ENCODE measurements at regions of chr5 and their contacts with region 1.

Region 1: DNA sequence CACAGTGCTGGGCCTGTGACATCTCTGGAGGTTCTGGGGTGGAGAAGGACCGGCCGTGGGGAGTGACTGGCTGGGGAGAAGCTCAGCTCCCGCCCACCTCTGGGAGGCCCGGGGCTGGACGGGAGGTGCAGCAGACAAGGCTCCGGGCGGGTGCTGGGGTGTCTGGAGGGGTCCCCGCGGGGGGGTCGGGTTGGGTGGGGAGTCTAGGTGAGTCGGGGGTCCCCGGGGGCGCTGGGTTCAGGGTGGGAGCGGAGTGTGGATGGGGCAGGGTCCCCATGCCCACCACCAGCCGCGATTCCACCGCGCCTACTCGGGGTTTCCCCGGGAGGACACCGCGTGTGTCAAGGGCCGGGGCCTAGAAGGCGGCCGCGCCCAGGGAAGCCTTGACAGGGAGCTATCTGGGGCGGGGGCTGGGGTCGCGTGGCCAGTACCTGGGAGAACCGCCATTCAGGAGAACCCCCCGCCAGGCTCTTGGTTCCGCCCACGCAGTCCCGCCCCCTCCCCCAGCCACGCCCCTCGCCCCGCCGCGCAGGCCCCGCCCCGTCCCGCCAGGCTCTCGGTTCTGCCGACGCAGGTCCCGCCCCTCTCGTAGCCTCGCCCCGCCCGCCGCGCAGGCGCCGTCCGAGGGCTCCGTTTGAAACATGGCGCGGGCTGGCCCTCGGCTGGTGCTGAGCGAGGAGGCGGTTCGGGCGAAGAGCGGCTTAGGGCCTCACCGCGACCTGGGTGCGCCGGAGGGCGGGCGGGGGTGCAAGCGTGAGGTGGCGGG is at the start of gene CEP72:
- DNase-seq: peak; percentile 81 to 96 (median 88)
- ATAC-seq: peak; percentile 98
- H3K4me3 ChIP-seq: peak within 1 kb of the TSS; percentile 59
- H3K4me3 Mint-ChIP-seq: peak within 1 kb of the TSS; percentile 84 to 99 (median 95)
- H3K27ac ChIP-seq: peak within 1 kb of the TSS; percentile 75
- H3K27ac Mint-ChIP-seq: peak within 1 kb of the TSS; percentile 76 to 96 (median 85)
- H3K4me1 ChIP-seq: peaks cover 5 to 7% of the 10 kb centered on the region in 2 donors
- H3K4me1 Mint-ChIP-seq: peaks cover 36 to 60% (median 56%) of the 10 kb centered on the region in 7 donors
- H3K27me3 ChIP-seq: no peaks in the 10 kb centered on the region
- H3K27me3 Mint-ChIP-seq: peaks cover 0 to 14% (median 8%) of the 10 kb centered on the region in 5 donors
- total RNA-seq, gene CEP72: 13.4 to 33.8 (median 22.7) TPM

Region 2: GRCh38 chr5:270340-270739 is 341.6 kb before region 1 on chr5:
- CTCF ChIA-PET with region 1: no interaction called
- POLR2A ChIA-PET with region 1: no interaction called
- intact Hi-C with region 1: loop called in 1 of 2 experiments (anchors 5 kb)
- DNase-seq: no peak
- ATAC-seq: no peak
- H3K4me3 ChIP-seq: no peak overlapping the region
- H3K4me3 Mint-ChIP-seq: peak overlapping the region; percentile 72 to 95 (median 91)
- H3K27ac ChIP-seq: no peak overlapping the region
- H3K27ac Mint-ChIP-seq: peak overlapping the region in 8 of 9 donors; percentile 59 to 99 (median 86)
- H3K4me1 ChIP-seq: peaks cover 0 to 7% of the 10 kb centered on the region in 2 donors
- H3K4me1 Mint-ChIP-seq: peaks cover 20 to 41% (median 39%) of the 10 kb centered on the region in 7 donors
- H3K27me3 ChIP-seq: no peaks in the 10 kb centered on the region
- H3K27me3 Mint-ChIP-seq: no peaks in the 10 kb centered on the region

Region 3: DNA sequence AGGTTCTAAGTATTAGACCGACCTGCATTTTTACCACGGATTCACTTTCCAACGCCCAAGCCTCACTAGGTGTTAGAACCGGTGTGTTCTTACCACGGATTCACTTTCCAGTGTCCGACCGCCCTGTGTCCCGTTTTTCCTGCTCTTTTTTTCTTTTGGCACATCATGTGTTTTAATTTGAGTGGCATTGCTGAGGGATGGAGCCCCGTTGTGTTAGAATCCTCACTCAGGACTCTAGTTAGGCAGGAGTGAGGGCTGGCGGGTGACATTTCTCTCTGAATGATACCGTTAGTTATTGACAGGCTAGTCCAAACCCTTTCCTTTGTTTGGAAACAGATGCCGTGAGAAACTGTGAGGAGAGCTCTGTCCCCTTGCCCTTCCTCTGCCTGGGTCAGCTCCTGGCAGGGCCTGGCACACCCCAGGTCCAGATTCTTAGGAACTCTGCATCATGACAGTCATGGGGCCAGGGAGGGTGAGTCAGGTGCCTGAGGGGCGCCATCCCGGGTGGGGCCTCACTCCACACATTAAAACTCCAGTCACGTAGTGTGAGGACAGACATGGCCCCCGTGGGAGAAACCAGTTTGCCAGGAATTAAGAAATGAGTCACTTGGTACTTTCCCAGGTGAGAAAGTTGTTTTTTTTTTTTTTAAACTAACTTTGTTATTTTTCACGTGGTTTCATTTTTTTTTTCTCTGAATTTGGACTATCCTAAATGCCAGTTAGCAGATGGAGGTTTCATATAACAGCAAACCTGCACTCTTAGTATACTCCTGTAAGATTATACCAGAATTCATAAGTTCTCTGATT is 153.2 kb before region 1 on chr5:
- CTCF ChIA-PET with region 1: no interaction called
- POLR2A ChIA-PET with region 1: no interaction called
- intact Hi-C with region 1: no loop called
- DNase-seq: peak in 1 of 9 donors; percentile 70
- ATAC-seq: no peak
- H3K4me3 ChIP-seq: no peak overlapping the region
- H3K4me3 Mint-ChIP-seq: peak overlapping the region in 1 of 10 donors; percentile 69
- H3K27ac ChIP-seq: peak overlapping the region; percentile 37
- H3K27ac Mint-ChIP-seq: peak overlapping the region in 7 of 9 donors; percentile 48 to 89 (median 73)
- H3K4me1 ChIP-seq: peaks cover 0 to 13% of the 10 kb centered on the region in 2 donors
- H3K4me1 Mint-ChIP-seq: peaks cover 9 to 66% (median 22%) of the 10 kb centered on the region in 7 donors
- H3K27me3 ChIP-seq: no peaks in the 10 kb centered on the region
- H3K27me3 Mint-ChIP-seq: no peaks in the 10 kb centered on the region

Region 4: DNA sequence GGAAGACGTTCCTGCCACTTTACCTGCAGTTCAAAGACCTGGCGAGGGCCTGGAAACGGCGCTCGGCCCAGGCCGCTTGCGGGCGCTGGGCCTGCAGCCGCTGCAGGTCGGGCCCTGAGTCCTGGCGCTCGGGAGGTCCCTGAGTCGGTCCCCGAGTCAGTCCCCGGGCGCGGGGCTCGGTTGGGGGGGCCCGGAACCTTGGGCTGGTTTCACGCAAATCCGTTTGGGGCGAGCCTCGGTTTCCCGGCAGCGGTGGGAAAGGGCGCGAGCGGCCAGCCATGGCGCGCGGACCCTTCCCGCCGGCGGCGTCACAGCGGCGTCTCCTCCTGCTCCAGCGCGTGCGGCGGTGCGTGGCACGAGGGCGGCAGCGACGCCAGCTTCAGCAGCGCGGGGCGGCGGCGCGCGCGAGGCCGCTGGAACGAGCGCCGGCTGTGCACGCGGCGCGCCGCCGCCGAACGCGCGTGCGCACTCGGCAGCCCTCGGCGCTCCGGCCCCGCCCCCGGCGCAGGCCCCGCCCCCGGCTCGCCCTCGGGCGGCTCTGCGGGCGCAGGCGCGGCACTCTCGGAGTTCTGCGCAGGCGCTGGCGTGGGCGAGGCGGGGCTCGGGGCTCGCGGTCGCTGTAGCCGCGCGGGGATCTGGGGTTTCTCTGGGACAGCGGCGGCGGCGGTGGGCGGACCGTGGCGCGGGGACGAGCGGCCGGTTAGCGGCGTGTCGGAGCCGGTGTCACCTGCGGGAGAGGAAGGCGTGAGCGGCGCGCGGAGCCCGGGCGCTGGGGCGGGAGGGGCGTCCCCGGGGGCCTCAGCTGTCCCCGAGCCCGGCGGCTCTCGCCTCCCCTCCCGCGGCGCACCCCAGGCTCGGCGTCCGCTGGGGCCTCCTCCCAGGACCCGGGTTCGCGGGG is 139.0 kb before region 1 on chr5:
- CTCF ChIA-PET with region 1: no interaction called
- POLR2A ChIA-PET with region 1: interaction called, 6 read pairs
- intact Hi-C with region 1: loop called (anchors 1 kb)
- DNase-seq: peak; percentile 82 to 97 (median 90)
- ATAC-seq: peak; percentile 89
- H3K4me3 ChIP-seq: peak overlapping the region; percentile 82
- H3K4me3 Mint-ChIP-seq: peak overlapping the region; percentile 80 to 91 (median 84)
- H3K27ac ChIP-seq: peak overlapping the region; percentile 95
- H3K27ac Mint-ChIP-seq: peak overlapping the region in 6 of 9 donors; percentile 15 to 89 (median 84)
- H3K4me1 ChIP-seq: peaks cover 14 to 18% of the 10 kb centered on the region in 2 donors
- H3K4me1 Mint-ChIP-seq: peaks cover 13 to 22% (median 19%) of the 10 kb centered on the region in 7 donors
- H3K27me3 ChIP-seq: peaks cover 0 to 3% of the 10 kb centered on the region in 2 donors
- H3K27me3 Mint-ChIP-seq: peaks cover 0 to 10% (median 8%) of the 10 kb centered on the region in 5 donors

Region 5: DNA sequence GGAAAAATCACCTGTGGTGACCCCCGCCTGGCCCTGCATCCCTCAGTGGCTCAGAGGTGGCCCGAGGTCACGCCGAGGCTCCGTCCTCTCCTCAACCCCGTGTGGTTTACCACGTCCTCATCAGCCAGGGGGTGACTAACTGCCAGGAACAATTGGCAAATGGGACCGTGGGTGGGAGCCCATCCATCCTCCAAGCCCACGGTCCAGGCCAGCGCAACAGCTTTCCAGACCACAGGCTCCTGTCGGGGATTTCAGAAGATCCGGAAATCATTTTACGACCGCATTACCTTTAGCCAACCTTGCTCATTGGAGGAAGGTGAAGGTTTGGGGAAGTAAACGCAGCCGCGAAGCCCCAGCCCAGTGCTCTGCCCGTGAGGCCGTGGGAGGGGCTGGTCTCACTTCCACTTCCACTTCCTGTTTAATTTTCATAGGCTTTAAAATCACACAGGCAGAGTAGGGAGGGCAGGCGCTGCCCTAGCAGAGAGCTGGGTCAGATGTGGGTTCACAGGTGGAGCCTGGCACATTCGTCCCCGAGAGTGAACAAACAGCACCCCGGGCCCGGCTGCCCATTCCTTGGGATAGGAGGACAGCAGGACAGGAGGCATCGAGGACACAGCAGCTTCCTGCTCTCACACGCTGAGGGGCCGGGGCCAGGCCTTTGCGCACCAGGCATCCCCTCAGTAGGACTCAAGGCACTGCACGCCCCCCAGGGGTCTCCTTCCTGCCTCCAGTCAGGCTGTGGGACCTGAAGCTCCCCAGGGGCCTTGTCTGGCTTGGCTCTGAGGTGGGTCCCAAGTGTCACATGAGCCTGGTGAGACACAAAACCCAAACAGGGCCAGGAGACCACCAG is 67.9 kb before region 1 on chr5:
- CTCF ChIA-PET with region 1: no interaction called
- POLR2A ChIA-PET with region 1: interaction called, 4 read pairs
- intact Hi-C with region 1: loop called in 1 of 2 experiments (anchors 2 kb)
- DNase-seq: peak in 7 of 9 donors; percentile 24 to 60 (median 50)
- ATAC-seq: peak; percentile 81
- H3K4me3 ChIP-seq: peak overlapping the region; percentile 48
- H3K4me3 Mint-ChIP-seq: peak overlapping the region; percentile 55 to 84 (median 76)
- H3K27ac ChIP-seq: peak overlapping the region; percentile 8
- H3K27ac Mint-ChIP-seq: peak overlapping the region; percentile 49 to 95 (median 84)
- H3K4me1 ChIP-seq: peaks cover 14 to 15% of the 10 kb centered on the region in 2 donors
- H3K4me1 Mint-ChIP-seq: peaks cover 7 to 18% (median 10%) of the 10 kb centered on the region in 7 donors
- H3K27me3 ChIP-seq: no peaks in the 10 kb centered on the region
- H3K27me3 Mint-ChIP-seq: peaks cover 3 to 23% (median 7%) of the 10 kb centered on the region in 5 donors

Region 6: GRCh38 chr5:892394-893136 is 280.7 kb after region 1 on chr5 and contains the starts of genes BRD9 and TRIP13:
- CTCF ChIA-PET with region 1: no interaction called
- POLR2A ChIA-PET with region 1: interaction called, 5 read pairs
- intact Hi-C with region 1: loop called in 1 of 2 experiments (anchors 1 kb)
- DNase-seq: peak; percentile 77 to 90 (median 86)
- ATAC-seq: peak; percentile 98
- H3K4me3 ChIP-seq: peak within 1 kb of the TSS; percentile 84
- H3K4me3 Mint-ChIP-seq: peak within 1 kb of the TSS; percentile 79 to 93 (median 86)
- H3K27ac ChIP-seq: peak within 1 kb of the TSS; percentile 91
- H3K27ac Mint-ChIP-seq: peak within 1 kb of the TSS; percentile 69 to 92 (median 89)
- H3K4me1 ChIP-seq: peaks cover 10 to 14% of the 10 kb centered on the region in 2 donors
- H3K4me1 Mint-ChIP-seq: peaks cover 12 to 35% (median 28%) of the 10 kb centered on the region in 7 donors
- H3K27me3 ChIP-seq: no peaks in the 10 kb centered on the region
- H3K27me3 Mint-ChIP-seq: no peaks in the 10 kb centered on the region
- total RNA-seq, gene BRD9: 63.2 to 93.2 (median 82.2) TPM
- total RNA-seq, gene TRIP13: 0.39 to 23.5 (median 0.57) TPM in 4 of 5 experiments, not detected in the other

Region 7: DNA sequence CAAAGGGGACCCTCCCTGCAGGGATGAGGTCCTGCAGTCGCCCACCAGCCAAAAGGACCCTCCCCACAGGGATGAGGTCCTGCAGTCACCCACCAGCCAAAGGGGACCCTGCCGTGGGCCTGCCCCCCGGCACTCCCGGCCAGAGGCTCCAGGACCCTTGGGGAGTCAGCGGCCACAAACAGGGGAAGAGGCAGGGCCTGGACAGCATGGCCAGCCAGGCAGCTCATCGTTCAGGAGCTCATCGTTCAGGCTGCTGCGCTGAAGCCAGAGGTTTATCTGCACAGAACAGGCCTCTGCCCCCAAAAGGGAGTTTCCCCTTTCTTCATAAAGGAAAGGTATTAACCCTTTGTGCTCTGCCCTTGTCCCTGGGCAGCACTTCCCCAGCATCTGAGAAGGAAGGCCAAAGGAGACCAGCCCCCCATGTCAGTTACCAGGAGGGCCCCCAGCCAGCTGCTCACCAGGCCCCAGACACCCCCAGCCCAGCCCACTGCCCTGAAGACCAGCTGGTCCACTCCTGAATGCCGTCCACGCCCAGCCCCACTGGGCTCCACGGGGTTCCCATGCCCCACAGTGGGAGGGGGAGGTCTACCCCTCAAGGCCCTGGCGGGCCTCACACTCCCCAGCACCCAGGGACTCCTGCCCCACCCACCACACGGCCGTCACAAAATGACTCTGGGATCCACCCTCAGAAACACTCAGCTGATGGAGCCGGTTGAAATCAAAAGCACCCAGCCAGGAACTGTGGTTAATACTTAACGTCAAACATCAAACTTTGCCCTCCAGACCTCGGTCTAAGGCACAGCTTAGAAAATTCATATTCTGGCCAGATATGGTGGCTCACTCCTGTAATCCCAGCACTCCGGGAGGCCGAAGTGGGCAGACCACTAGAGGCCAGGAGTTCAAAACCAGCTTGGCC is 493.7 kb after region 1 on chr5:
- CTCF ChIA-PET with region 1: no interaction called
- POLR2A ChIA-PET with region 1: no interaction called
- intact Hi-C with region 1: loop called in 1 of 2 experiments (anchors 10 kb)
- DNase-seq: peak; percentile 50 to 86 (median 83)
- ATAC-seq: peak; percentile 82
- H3K4me3 ChIP-seq: peak overlapping the region; percentile 77
- H3K4me3 Mint-ChIP-seq: peak overlapping the region; percentile 77 to 94 (median 88)
- H3K27ac ChIP-seq: peak overlapping the region; percentile 89
- H3K27ac Mint-ChIP-seq: peak overlapping the region; percentile 85 to 100 (median 97)
- H3K4me1 ChIP-seq: peaks cover 37 to 79% of the 10 kb centered on the region in 2 donors
- H3K4me1 Mint-ChIP-seq: peaks cover 48 to 90% (median 69%) of the 10 kb centered on the region in 7 donors
- H3K27me3 ChIP-seq: no peaks in the 10 kb centered on the region
- H3K27me3 Mint-ChIP-seq: no peaks in the 10 kb centered on the region

Region 8: GRCh38 chr5:1792842-1793266 is 1181.0 kb after region 1 on chr5:
- CTCF ChIA-PET with region 1: no interaction called
- POLR2A ChIA-PET with region 1: no interaction called
- intact Hi-C with region 1: loop called in 1 of 2 experiments (anchors 5 kb)
- DNase-seq: peak; percentile 28 to 78 (median 72)
- ATAC-seq: peak; percentile 93
- H3K4me3 ChIP-seq: peak overlapping the region; percentile 43
- H3K4me3 Mint-ChIP-seq: peak overlapping the region; percentile 48 to 91 (median 70)
- H3K27ac ChIP-seq: peak overlapping the region; percentile 56
- H3K27ac Mint-ChIP-seq: peak overlapping the region; percentile 84 to 99 (median 95)
- H3K4me1 ChIP-seq: peaks cover 21% of the 10 kb centered on the region in 2 donors
- H3K4me1 Mint-ChIP-seq: peaks cover 26 to 68% (median 48%) of the 10 kb centered on the region in 7 donors
- H3K27me3 ChIP-seq: no peaks in the 10 kb centered on the region
- H3K27me3 Mint-ChIP-seq: no peaks in the 10 kb centered on the region